Ovary (tissue), 10 donors: ENCODE measurements at regions of chr1 and their contacts with region 1.

Region 1: GRCh38 chr1:33080885-33081553 is at the start of gene AZIN2:
- DNase-seq: peak; percentile 98 to 99 (median 99)
- H3K4me3 ChIP-seq: peak within 1 kb of the TSS; percentile 72
- H3K27ac ChIP-seq: peak within 1 kb of the TSS in 1 of 2 donors; percentile 6
- H3K4me1 ChIP-seq: peaks cover 10% of the 10 kb centered on the region
- H3K27me3 ChIP-seq: no peaks in the 10 kb centered on the region
- CTCF ChIP-seq: no peak
- EP300 ChIP-seq: no peak
- POLR2A ChIP-seq: peak; percentile 58
- total RNA-seq, gene AZIN2: 7.6 to 15.7 (median 9.5) TPM

Region 2: GRCh38 chr1:32876341-32877210 is 204.4 kb before region 1 on chr1:
- intact Hi-C with region 1: loop called in 1 of 4 experiments (anchors 5 kb)
- DNase-seq: peak in 2 of 5 donors; percentile 34 to 69
- H3K4me3 ChIP-seq: no peak overlapping the region
- H3K27ac ChIP-seq: no peak overlapping the region
- H3K4me1 ChIP-seq: peaks cover 11% of the 10 kb centered on the region
- H3K27me3 ChIP-seq: no peaks in the 10 kb centered on the region
- CTCF ChIP-seq: peak; percentile 23 to 44 (median 25)
- EP300 ChIP-seq: no peak
- POLR2A ChIP-seq: no peak

Region 3: GRCh38 chr1:33825506-33825905 is 744.5 kb after region 1 on chr1:
- intact Hi-C with region 1: no loop called
- DNase-seq: no peak
- H3K4me3 ChIP-seq: no peak overlapping the region
- H3K27ac ChIP-seq: no peak overlapping the region
- H3K4me1 ChIP-seq: no peaks in the 10 kb centered on the region
- H3K27me3 ChIP-seq: no peaks in the 10 kb centered on the region
- CTCF ChIP-seq: no peak
- EP300 ChIP-seq: no peak
- POLR2A ChIP-seq: no peak